ENCODE measurements at regions of chr2 and their contacts with region 1.

Region 1: DNA sequence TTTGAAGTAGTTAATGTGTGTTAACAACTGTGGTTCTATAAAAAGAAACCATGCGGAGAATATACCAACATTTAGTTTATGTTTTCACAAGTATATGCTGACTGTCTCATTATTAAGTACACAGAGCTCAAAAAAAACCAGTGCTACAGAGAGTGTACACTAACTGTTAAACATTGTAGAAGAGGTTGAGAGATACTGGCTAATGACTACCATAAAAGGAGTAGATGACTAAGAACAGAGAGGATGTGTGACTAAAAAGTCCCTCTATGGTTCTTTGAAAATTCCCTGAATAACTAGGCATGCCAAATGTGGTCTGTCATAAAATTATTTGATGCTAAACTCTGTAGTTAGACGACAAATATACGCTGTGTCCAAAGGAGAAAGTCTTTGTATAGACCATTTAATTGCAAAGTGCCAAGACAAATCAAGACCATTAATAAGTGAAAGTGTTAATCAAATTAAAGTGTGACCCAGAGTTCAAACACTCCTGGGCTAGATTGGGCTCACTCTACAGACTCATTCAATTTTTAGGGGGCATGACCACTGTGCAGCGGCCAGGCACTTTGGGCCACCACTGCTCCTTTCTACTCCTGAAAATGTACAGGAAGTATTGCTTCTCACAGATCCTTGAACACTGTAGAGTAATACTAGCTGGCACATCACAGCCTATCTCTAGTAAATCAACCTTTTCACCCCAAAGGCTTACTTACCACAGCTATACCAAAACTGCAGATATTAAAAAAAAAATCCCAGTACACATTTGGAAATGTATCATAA is 45.1 kb upstream of the SERTAD2 start:
- DNase-seq: no peak
- H3K4me3 ChIP-seq: no peak overlapping the region
- H3K4me3 Mint-ChIP-seq: no peak overlapping the region
- H3K27ac Mint-ChIP-seq: peak overlapping the region; percentile 1
- H3K4me1 ChIP-seq: peaks cover 26% of the 10 kb centered on the region
- H3K4me1 Mint-ChIP-seq: peaks cover 31% of the 10 kb centered on the region
- H3K27me3 ChIP-seq: no peaks in the 10 kb centered on the region
- H3K27me3 Mint-ChIP-seq: no peaks in the 10 kb centered on the region
- CTCF ChIP-seq: no peak

Region 2: DNA sequence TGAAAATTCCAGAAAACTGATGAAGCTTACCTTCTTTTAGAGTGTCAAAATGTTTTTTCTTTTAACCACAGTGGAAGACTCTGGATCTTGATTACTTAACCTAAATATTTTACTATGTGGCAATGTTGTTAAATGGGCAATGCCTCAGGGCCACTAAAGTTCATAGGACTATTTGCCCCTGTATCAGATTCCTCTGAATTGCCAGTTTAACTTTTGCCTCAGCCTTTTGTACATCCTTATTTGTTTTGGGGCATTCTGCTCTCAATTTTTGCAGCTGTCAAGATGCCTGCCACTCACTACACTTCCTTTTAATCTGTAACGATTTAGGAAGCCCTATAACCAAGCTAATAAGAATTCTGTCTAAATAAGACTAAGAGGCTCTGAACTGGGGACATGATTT is 13.4 kb before region 1 on chr2:
- CTCF ChIA-PET with region 1: no interaction called
- POLR2A ChIA-PET with region 1: no interaction called
- intact Hi-C with region 1: loop called (anchors 1 kb)
- DNase-seq: peak in 1 of 2 experiments; percentile 23
- H3K4me3 ChIP-seq: no peak overlapping the region
- H3K4me3 Mint-ChIP-seq: no peak overlapping the region
- H3K27ac Mint-ChIP-seq: no peak overlapping the region
- H3K4me1 ChIP-seq: peaks cover 21% of the 10 kb centered on the region
- H3K4me1 Mint-ChIP-seq: peaks cover 17% of the 10 kb centered on the region
- H3K27me3 ChIP-seq: no peaks in the 10 kb centered on the region
- H3K27me3 Mint-ChIP-seq: no peaks in the 10 kb centered on the region
- CTCF ChIP-seq: no peak

Region 3: GRCh38 chr2:64720535-64721327 is 21.9 kb after region 1 on chr2:
- CTCF ChIA-PET with region 1: no interaction called
- POLR2A ChIA-PET with region 1: interaction called, 13 read pairs
- intact Hi-C with region 1: no loop called
- DNase-seq: no peak
- H3K4me3 ChIP-seq: no peak overlapping the region
- H3K4me3 Mint-ChIP-seq: no peak overlapping the region
- H3K27ac Mint-ChIP-seq: no peak overlapping the region
- H3K4me1 ChIP-seq: peaks cover 14% of the 10 kb centered on the region
- H3K4me1 Mint-ChIP-seq: no peaks in the 10 kb centered on the region
- H3K27me3 ChIP-seq: no peaks in the 10 kb centered on the region
- H3K27me3 Mint-ChIP-seq: no peaks in the 10 kb centered on the region
- CTCF ChIP-seq: no peak

Measured in Caco-2 (cell line).